ENCODE measurements at regions of chr2 and their contacts with region 1.

Region 1: GRCh38 chr2:196076778-196077568 is 8.3 kb upstream of the DNAH7 start:
- DNase-seq: no peak
- ATAC-seq: no peak
- H3K4me3 Mint-ChIP-seq: no peak overlapping the region
- H3K27ac Mint-ChIP-seq: no peak overlapping the region
- H3K4me1 Mint-ChIP-seq: peaks cover 14% of the 10 kb centered on the region
- H3K27me3 Mint-ChIP-seq: no peaks in the 10 kb centered on the region

Region 2: DNA sequence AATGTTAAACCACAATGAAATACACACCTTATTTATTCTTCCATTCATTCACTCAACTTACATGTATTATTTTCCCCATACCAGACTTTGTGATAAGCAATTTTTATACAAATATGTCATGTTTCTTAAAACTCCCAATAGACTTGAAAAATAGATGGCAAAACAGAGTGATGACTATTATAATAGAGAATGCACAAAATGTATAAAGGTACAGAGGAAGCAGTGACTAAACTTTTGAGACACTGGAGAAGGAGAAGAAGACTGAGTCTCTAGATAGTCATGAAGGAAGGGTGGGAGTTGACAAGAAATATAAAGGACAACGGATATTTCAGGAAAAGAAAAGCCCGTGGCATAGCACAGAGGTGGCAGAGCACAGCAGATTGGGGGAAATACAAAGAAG is 618.0 kb before region 1 on chr2:
- CTCF ChIA-PET with region 1: no interaction called
- POLR2A ChIA-PET with region 1: no interaction called
- intact Hi-C with region 1: no loop called
- DNase-seq: no peak
- ATAC-seq: no peak
- H3K4me3 Mint-ChIP-seq: no peak overlapping the region
- H3K27ac Mint-ChIP-seq: no peak overlapping the region
- H3K4me1 Mint-ChIP-seq: peaks cover 9% of the 10 kb centered on the region
- H3K27me3 Mint-ChIP-seq: no peaks in the 10 kb centered on the region

Region 3: GRCh38 chr2:196101325-196101991 is 24.5 kb after region 1 on chr2:
- CTCF ChIA-PET with region 1: interaction called, 15 read pairs
- POLR2A ChIA-PET with region 1: interaction called, 3 read pairs
- intact Hi-C with region 1: no loop called
- DNase-seq: peak; percentile 75
- ATAC-seq: peak; percentile 97
- H3K4me3 Mint-ChIP-seq: no peak overlapping the region
- H3K27ac Mint-ChIP-seq: peak overlapping the region; percentile 74
- H3K4me1 Mint-ChIP-seq: peaks cover 42% of the 10 kb centered on the region
- H3K27me3 Mint-ChIP-seq: no peaks in the 10 kb centered on the region

Region 4: DNA sequence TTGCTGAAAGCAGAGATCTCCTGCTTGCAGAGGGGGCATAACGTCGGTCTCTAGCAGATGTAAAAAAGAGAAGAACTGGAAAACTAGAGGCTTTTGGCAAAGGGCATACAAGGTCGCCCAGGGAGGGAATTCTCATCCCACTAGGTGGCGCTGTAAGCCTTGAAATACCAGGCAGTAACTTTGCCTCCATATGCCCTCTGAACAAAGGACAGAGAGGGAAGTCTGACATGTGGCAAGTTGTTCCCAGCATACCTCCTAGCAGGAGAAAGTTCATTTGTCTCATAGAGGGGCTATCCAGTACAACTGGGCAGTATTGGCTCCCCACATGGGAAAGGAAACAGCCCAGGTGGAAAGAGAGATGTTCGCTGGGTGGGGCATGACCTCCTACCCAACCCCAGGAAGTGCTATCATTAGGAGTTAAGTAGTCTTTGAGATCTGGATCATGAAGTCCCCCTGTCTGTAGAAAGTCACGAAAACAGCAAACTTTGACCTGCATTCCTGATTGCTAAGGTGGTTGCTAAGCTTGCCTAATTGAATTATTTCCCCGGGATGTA is 54.5 kb after region 1 on chr2:
- CTCF ChIA-PET with region 1: interaction called, 12 read pairs
- POLR2A ChIA-PET with region 1: no interaction called
- intact Hi-C with region 1: loop called (anchors 2 to 5 kb)
- DNase-seq: peak; percentile 83
- ATAC-seq: peak; percentile 62
- H3K4me3 Mint-ChIP-seq: no peak overlapping the region
- H3K27ac Mint-ChIP-seq: peak overlapping the region; percentile 65
- H3K4me1 Mint-ChIP-seq: peaks cover 5% of the 10 kb centered on the region
- H3K27me3 Mint-ChIP-seq: no peaks in the 10 kb centered on the region

Region 5: DNA sequence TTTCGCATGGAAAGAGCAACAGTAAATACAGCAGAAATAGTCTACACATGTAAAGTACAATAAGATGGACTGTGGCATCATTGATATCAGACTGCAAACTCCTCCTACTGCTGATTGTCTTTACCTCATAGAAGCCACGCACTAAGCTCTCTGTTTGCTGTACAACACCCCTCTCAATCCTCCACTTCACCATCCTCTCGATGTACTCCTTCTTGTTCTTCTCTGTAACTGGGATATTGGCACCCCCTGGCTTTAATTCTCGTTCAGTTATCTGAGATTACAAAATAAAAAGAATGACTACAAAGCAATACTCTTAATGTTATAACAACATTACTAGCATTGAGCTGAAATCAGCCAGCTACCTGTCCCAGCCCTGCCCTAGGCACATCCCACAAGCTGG is 143.7 kb after region 1 on chr2:
- CTCF ChIA-PET with region 1: interaction called, 11 read pairs
- POLR2A ChIA-PET with region 1: no interaction called
- intact Hi-C with region 1: loop called in 1 of 2 experiments (anchors 5 kb)
- DNase-seq: no peak
- ATAC-seq: peak; percentile 82
- H3K4me3 Mint-ChIP-seq: peak overlapping the region; percentile 17
- H3K27ac Mint-ChIP-seq: peak overlapping the region; percentile 23
- H3K4me1 Mint-ChIP-seq: peaks cover 76% of the 10 kb centered on the region
- H3K27me3 Mint-ChIP-seq: no peaks in the 10 kb centered on the region

Region 6: DNA sequence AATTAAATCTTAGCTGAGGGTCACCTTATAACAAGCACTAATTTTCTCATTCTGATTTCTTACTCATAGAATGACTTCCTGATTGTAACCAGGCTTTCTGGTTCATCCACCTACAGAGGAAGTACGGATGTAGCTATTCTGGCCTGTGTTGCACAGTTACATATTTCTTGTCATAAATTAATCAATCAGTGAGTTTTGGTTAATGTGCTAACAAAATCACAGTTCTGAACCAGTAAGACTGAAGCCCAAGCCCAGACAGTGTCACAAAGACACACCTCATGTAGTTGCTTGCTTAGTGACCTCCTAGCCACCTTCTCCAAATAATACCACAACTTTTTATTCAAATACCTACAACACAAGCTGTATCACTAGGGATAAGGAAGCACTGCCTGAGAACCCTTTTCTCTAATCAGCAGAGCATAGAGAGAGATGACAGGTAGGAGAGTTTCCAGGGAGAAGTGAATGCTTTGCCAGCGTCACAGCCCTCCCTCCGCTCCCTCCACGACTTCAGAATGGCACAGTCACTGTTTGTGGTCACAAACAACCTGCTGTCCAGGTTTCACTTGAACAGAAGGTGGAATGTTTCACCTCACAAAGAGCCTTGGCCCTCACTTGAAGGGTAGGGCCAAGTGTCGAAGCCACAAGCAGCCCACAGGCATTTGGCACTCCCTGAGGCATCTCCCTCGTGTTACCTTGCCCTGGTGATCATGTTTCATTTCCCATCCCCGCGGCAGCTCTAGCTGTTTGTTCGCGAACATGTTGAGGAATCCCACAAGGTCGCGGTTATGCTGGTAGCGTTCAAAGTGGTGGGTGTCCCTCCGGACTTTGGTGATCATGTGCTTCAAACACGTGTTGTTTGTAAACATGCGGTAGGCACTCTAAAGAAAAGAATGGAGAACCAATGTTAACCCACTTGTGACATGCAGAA is 215.2 kb after region 1 on chr2:
- CTCF ChIA-PET with region 1: interaction called, 9 read pairs
- POLR2A ChIA-PET with region 1: no interaction called
- intact Hi-C with region 1: loop called in 1 of 2 experiments (anchors 5 kb)
- DNase-seq: no peak
- ATAC-seq: peak; percentile 16
- H3K4me3 Mint-ChIP-seq: no peak overlapping the region
- H3K27ac Mint-ChIP-seq: peak overlapping the region; percentile 57
- H3K4me1 Mint-ChIP-seq: peaks cover 55% of the 10 kb centered on the region
- H3K27me3 Mint-ChIP-seq: no peaks in the 10 kb centered on the region

Region 7: GRCh38 chr2:196337208-196337953 is 260.4 kb after region 1 on chr2:
- CTCF ChIA-PET with region 1: interaction called, 102 read pairs
- POLR2A ChIA-PET with region 1: no interaction called
- intact Hi-C with region 1: loop called (anchors 1 kb)
- DNase-seq: peak; percentile 35
- ATAC-seq: peak; percentile 49
- H3K4me3 Mint-ChIP-seq: no peak overlapping the region
- H3K27ac Mint-ChIP-seq: no peak overlapping the region
- H3K4me1 Mint-ChIP-seq: peaks cover 9% of the 10 kb centered on the region
- H3K27me3 Mint-ChIP-seq: no peaks in the 10 kb centered on the region

Region 8: DNA sequence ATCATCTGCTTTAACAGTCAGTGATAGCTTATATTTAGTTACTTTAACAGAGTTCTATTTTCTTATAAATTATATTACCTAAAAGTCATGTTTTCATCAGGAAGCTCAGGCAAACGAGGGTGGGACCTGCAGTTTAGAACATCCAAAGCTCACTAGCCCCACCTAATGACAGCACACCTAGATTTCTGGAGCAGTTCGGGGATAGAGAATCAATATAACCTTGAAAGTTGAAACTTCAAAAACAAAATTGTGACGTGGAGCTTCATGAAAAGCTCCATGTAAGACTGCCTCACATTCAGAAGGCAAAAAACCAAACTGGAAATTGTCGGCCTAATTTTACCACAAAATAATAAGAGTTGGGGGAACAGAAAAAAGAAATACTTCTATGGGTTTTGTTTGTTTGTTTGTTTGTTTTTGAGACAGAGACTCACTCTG is 376.7 kb after region 1 on chr2:
- CTCF ChIA-PET with region 1: interaction called, 38 read pairs
- POLR2A ChIA-PET with region 1: no interaction called
- intact Hi-C with region 1: loop called (anchors 1 kb)
- DNase-seq: peak; percentile 58
- ATAC-seq: peak; percentile 51
- H3K4me3 Mint-ChIP-seq: no peak overlapping the region
- H3K27ac Mint-ChIP-seq: no peak overlapping the region
- H3K4me1 Mint-ChIP-seq: peaks cover 2% of the 10 kb centered on the region
- H3K27me3 Mint-ChIP-seq: peaks cover 22% of the 10 kb centered on the region

Measured in activated CD4-positive, alpha-beta T cell treated with anti-CD3 and anti-CD28 coated beads for 36 hours (primary cell).